GM12878 (cell line): ENCODE measurements at regions of chr10 and their contacts with region 1.

Region 1: DNA sequence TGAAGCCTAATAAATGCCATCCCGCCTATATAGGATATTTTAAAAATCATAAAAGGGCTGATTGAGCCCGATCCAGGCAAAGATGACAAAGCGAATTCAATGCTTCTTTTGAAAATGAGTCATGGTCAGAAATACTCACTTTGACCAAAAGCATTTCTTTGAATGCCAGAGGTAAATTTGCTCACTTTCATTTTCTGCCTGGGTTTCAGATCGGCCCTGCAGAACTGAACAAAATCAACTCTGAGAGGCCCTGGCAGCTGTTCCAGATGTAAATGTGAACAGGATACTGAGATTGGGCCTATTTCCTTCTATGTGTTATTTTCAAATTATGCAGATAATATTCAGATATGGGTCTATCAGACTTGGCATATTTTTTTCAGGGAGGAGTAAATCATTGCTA is 114.8 kb upstream of the ARID5B start:
- DNase-seq: peak; percentile 50
- ATAC-seq: peak; percentile 95
- H3K4me3 ChIP-seq: no peak overlapping the region
- H3K27ac ChIP-seq: no peak overlapping the region
- H3K4me1 ChIP-seq: peaks cover 9% of the 10 kb centered on the region; the same call in 1 of the 2 replicates
- H3K27me3 ChIP-seq: no peaks in the 10 kb centered on the region
- CTCF ChIP-seq: no peak
- EP300 ChIP-seq: no peak
- POLR2A ChIP-seq: no peak
- RAD21 ChIP-seq: no peak

Region 2: DNA sequence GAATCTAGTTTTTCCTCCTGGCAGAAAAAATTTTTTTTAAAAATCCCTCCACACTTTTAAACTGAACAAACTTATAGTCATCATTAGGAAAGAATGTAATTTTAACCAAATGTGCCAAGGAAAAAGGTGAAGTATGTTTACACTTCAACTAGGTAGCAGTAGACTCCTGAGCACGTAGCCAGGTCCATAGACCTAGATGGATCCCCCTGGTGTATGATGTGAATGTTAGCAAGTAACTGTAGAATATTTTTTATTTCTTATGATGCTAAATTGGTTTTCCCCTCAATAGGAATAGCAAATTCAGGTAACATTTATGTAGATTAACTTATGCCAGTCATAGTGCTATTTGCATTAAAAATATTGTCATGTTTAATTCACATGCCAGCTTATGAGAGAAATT is 104.4 kb before region 1 on chr10:
- CTCF ChIA-PET with region 1: no interaction called
- POLR2A ChIA-PET with region 1: no interaction called
- RAD21 ChIA-PET with region 1: no interaction called
- SMC1A ChIA-PET with region 1: no interaction called
- in situ Hi-C with region 1: no loop called
- intact Hi-C with region 1: no loop called
- DNase-seq: no peak
- ATAC-seq: no peak
- H3K4me3 ChIP-seq: no peak overlapping the region
- H3K27ac ChIP-seq: no peak overlapping the region
- H3K4me1 ChIP-seq: no peaks in the 10 kb centered on the region
- H3K27me3 ChIP-seq: no peaks in the 10 kb centered on the region; a peak in 1 of 4 replicates
- CTCF ChIP-seq: no peak
- EP300 ChIP-seq: no peak
- POLR2A ChIP-seq: no peak
- RAD21 ChIP-seq: no peak

Region 3: GRCh38 chr10:61774031-61774430 is 12.7 kb before region 1 on chr10:
- CTCF ChIA-PET with region 1: no interaction called
- POLR2A ChIA-PET with region 1: no interaction called
- RAD21 ChIA-PET with region 1: no interaction called
- SMC1A ChIA-PET with region 1: no interaction called
- in situ Hi-C with region 1: no loop called
- intact Hi-C with region 1: loop called (anchors 1 kb)
- DNase-seq: no peak
- ATAC-seq: no peak
- H3K4me3 ChIP-seq: no peak overlapping the region
- H3K27ac ChIP-seq: no peak overlapping the region
- H3K4me1 ChIP-seq: no peaks in the 10 kb centered on the region
- H3K27me3 ChIP-seq: no peaks in the 10 kb centered on the region
- CTCF ChIP-seq: no peak
- EP300 ChIP-seq: no peak
- POLR2A ChIP-seq: no peak
- RAD21 ChIP-seq: no peak